Endothelial cell of umbilical vein (primary cell): ENCODE measurements at regions of chr14 and their contacts with region 1.

Region 1: DNA sequence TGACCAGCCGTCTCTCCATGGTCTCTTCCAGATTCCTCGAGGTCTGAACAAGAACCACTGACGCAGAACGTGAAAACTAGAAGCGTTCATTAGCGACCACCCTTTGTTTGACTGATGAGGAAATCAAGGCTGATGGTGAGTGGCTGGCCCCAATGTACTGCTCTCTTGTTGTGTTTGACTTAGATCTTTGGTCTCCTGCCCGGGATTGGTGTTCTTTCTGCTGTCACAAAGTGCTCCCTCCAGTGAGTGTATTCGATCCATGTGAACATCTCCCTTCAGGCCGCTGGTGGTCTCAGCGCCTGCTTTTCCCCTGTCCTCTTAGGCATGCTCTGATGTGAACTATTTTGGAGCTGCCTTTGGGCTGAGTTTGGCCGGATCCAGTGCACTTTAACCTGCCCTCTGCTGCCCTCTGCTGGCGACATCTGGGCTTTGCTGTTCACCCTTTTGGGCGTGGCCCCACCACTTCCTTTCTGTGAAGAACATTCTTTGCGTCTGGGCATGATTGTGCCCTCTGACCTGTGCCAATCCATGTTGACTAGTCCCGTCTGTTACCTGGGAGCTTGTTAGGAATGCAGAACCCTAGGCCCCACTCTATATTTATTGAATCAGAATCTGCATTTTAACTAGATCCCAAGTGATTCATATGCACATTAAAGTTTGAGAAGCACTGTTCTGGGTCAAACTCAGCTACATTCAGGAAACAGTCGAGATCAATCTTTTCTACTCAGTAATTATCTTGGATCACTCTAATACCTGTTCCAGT is 279.2 kb downstream of the TTC6 start:
- DNase-seq: peak; percentile 69
- H3K4me3 ChIP-seq: no peak overlapping the region
- H3K27ac ChIP-seq: no peak overlapping the region
- H3K4me1 ChIP-seq: no peaks in the 10 kb centered on the region
- H3K27me3 ChIP-seq: peaks cover 5 to 14% of the 10 kb centered on the region in 2 experiments
- CTCF ChIP-seq: peak; percentile 87 to 93
- POLR2A ChIP-seq: no peak

Region 2: GRCh38 chr14:37246427-37246914 is 628.1 kb before region 1 on chr14:
- CTCF ChIA-PET with region 1: interaction called, 34 read pairs
- POLR2A ChIA-PET with region 1: no interaction called
- dilution Hi-C with region 1: no loop called
- intact Hi-C with region 1: loop called (anchors 1 kb)
- DNase-seq: peak; percentile 52
- H3K4me3 ChIP-seq: no peak overlapping the region
- H3K27ac ChIP-seq: no peak overlapping the region
- H3K4me1 ChIP-seq: no peaks in the 10 kb centered on the region
- H3K27me3 ChIP-seq: no peaks in the 10 kb centered on the region
- CTCF ChIP-seq: peak; percentile 27 to 54
- POLR2A ChIP-seq: no peak

Region 3: GRCh38 chr14:37253905-37254304 is 620.7 kb before region 1 on chr14:
- CTCF ChIA-PET with region 1: interaction called, 11 read pairs
- POLR2A ChIA-PET with region 1: no interaction called
- dilution Hi-C with region 1: no loop called
- intact Hi-C with region 1: no loop called
- DNase-seq: peak; percentile 82
- H3K4me3 ChIP-seq: no peak overlapping the region
- H3K27ac ChIP-seq: no peak overlapping the region
- H3K4me1 ChIP-seq: peaks cover 22% of the 10 kb centered on the region
- H3K27me3 ChIP-seq: no peaks in the 10 kb centered on the region
- CTCF ChIP-seq: no peak
- POLR2A ChIP-seq: no peak

Region 4: GRCh38 chr14:37594238-37594914 is 280.2 kb before region 1 on chr14:
- CTCF ChIA-PET with region 1: no interaction called
- POLR2A ChIA-PET with region 1: no interaction called
- dilution Hi-C with region 1: no loop called
- intact Hi-C with region 1: loop called (anchors 2 kb)
- DNase-seq: peak; percentile 80
- H3K4me3 ChIP-seq: peak overlapping the region; percentile 30 to 62 (median 41)
- H3K27ac ChIP-seq: no peak overlapping the region
- H3K4me1 ChIP-seq: peaks cover 4% of the 10 kb centered on the region
- H3K27me3 ChIP-seq: peaks cover 73 to 88% of the 10 kb centered on the region in 2 experiments
- CTCF ChIP-seq: peak; percentile 81 to 89
- POLR2A ChIP-seq: no peak

Region 5: DNA sequence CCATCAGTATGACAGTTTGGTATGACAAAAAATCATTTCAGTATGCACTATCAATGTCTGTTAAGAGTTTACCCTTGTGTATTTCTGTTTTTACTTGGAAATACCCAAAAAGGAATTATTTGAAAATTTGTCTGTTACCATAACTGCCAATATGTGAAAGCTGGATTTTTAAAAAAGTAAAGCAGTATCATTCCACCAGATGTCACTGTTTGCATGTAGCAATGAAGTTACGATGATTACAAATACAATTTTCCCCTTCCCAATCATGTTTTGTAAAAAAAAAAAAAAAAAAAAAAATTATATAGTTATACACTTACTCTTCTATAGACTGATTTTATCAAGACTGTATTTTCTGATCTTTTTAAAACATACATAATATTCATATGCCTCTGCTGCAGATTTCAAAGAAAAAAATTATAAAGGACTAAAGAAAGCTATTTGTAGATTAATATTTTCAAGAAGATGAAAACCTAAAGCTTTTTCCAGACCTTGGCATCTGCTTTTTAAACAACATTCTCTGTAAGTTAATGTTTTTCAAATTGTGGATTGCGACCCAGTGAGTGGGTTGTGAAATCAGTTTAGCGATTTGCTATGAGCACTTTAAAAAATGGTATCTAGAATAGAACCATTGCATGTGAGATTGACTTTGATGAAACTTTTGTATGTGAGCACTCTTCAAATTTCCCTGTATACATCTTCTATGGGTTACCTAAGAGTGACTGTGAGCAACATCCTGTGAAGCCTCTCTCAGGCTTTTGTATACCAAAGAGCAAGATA is 165.0 kb before region 1 on chr14:
- CTCF ChIA-PET with region 1: interaction called, 43 read pairs
- POLR2A ChIA-PET with region 1: no interaction called
- dilution Hi-C with region 1: no loop called
- intact Hi-C with region 1: loop called (anchors 1 kb)
- DNase-seq: peak; percentile 16
- H3K4me3 ChIP-seq: no peak overlapping the region
- H3K27ac ChIP-seq: no peak overlapping the region
- H3K4me1 ChIP-seq: no peaks in the 10 kb centered on the region
- H3K27me3 ChIP-seq: peaks cover 6 to 11% of the 10 kb centered on the region in 2 experiments
- CTCF ChIP-seq: peak in 1 of 2 donors; percentile 24
- POLR2A ChIP-seq: no peak

Region 6: DNA sequence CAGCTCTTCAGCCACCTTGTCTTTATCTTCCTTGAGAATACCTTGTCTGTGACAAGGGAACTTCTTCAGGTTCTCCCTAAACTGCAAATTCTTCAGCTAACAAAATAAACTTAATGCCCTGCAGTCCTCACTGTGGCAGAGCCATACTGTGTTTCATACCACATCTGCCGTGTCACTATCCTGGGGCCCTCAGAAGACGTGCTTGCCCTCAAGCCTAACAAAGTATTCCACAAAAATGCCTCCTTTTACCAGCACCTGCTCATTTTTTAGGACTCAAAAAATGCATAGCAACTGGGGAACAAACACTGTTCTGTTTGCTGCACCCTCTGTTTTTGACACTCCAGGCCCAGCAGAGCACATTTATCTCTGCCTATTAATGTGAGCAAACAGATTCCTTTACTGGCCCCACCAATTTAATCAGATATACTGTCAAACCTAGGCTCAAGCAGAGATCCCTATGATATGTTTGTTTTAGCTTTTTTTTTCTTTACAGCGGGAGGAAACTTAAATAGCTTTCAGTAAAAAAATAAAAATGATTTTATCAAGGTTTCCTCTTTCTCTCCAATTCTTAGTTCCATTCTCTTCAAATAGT is 62.4 kb after region 1 on chr14:
- CTCF ChIA-PET with region 1: no interaction called
- POLR2A ChIA-PET with region 1: no interaction called
- dilution Hi-C with region 1: no loop called
- intact Hi-C with region 1: no loop called
- DNase-seq: no peak
- H3K4me3 ChIP-seq: no peak overlapping the region
- H3K27ac ChIP-seq: no peak overlapping the region
- H3K4me1 ChIP-seq: no peaks in the 10 kb centered on the region
- H3K27me3 ChIP-seq: no peaks in the 10 kb centered on the region
- CTCF ChIP-seq: no peak
- POLR2A ChIP-seq: no peak